Mammary epithelial cell (primary cell): ENCODE measurements at regions of chr10 and their contacts with region 1.

Region 1: DNA sequence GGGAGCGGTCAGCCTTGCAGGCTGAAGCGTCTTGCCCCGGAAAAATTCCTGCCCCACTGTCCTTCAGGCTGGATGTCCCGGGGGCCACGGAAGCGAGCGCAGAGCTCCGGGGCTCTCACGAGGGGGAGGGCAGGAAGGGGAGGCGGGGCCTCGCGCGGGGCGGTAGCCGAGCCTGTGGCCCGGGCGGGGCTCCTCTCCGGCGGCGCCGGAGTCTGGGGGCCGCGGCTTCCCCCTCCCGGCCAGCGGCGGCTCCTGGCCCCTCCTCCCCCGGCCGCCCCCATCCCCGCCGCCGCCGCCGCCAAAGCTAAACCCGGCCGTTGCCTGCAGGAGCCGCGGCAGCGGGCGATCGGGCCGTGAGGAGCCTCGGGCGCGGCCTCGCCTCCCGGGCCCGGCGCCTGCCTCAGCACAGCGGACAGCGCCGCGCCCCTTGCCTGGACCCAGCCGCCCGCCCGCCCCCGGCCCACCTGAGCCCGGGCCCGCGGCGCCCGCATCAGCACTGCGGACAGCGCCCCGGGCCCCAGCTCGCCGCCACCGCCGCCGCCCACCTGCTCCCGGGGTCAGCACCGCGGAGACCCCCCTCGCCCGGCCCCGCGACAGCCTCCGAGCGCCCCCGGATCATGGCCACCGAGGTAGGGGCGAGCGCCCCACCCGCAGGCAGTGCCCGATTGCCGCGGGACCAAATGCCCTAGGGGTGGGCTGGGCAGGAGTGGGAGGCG is at the start of gene GOLGA7B:
- DNase-seq: peak; percentile 41
- H3K4me3 ChIP-seq: peak within 1 kb of the TSS; percentile 56 to 60 (median 58)
- H3K27ac ChIP-seq: no peak within 1 kb of the TSS
- H3K4me1 ChIP-seq: peaks cover 46% of the 10 kb centered on the region
- H3K27me3 ChIP-seq: no peaks in the 10 kb centered on the region
- CTCF ChIP-seq: no peak
- total RNA-seq, gene GOLGA7B: 0.50 to 3.1 TPM

Region 2: GRCh38 chr10:97827778-97828291 is 22.0 kb before region 1 on chr10:
- CTCF ChIA-PET with region 1: no interaction called
- dilution Hi-C with region 1: no loop called
- in situ Hi-C with region 1: no loop called
- intact Hi-C with region 1: loop called (anchors 2 kb)
- DNase-seq: peak; percentile 65
- H3K4me3 ChIP-seq: no peak overlapping the region
- H3K27ac ChIP-seq: no peak overlapping the region
- H3K4me1 ChIP-seq: peaks cover 7% of the 10 kb centered on the region
- H3K27me3 ChIP-seq: no peaks in the 10 kb centered on the region
- CTCF ChIP-seq: peak in 1 of 2 donors; percentile 15

Region 3: GRCh38 chr10:98055875-98056516 is 206.2 kb after region 1 on chr10:
- CTCF ChIA-PET with region 1: no interaction called
- dilution Hi-C with region 1: no loop called
- in situ Hi-C with region 1: no loop called
- intact Hi-C with region 1: no loop called
- DNase-seq: peak; percentile 11
- H3K4me3 ChIP-seq: no peak overlapping the region
- H3K27ac ChIP-seq: no peak overlapping the region
- H3K4me1 ChIP-seq: no peaks in the 10 kb centered on the region
- H3K27me3 ChIP-seq: peaks cover 3% of the 10 kb centered on the region
- CTCF ChIP-seq: no peak